Body of pancreas (tissue), 4 donors: ENCODE measurements at regions of chr11 and their contacts with region 1.

Region 1: DNA sequence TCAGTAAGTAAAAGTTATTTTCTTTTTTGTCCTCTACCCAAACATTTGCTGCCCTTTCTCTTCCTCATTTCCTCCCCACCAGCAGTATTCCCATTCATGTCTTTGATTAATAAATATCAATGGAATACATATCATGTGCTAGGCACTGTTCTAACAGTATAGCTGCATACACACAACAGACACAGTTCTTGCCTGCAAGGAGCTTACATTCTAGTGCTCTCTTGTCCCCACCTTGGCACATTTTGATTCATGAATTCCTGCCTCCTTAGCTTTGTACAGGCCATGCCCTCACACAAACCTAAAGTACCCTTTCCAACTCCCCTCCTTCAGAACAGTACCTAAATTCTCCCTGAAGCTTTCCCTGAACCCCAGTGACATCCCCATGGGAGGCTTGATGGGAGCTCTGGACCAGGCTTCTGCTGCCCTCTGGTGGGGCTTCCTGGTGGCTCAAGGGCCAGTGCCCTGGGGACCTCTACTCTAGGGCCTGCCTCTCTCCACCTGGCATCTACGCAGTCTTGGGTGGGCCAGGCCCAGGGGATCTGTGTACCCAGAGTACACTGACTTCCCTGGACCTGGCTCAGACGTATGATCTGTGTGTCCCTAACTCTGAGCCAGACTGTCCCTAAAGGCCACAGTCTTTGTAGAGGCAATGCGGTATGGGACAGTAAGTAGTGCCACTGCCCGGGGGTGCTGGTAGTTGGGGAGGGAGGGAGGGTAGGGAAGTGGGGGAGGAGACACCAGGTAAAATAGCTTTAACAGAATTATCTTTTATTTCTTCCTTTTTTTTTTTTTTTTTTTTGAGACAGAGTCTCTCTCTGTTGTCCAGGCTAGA is 14.1 kb downstream of the RPS13 start:
- DNase-seq: peak; percentile 75 to 86 (median 82)
- ATAC-seq: peak; percentile 97
- H3K4me3 ChIP-seq: no peak overlapping the region
- H3K27ac ChIP-seq: no peak overlapping the region
- H3K4me1 ChIP-seq: no peaks in the 10 kb centered on the region
- H3K27me3 ChIP-seq: no peaks in the 10 kb centered on the region
- CTCF ChIP-seq: peak; percentile 74 to 93 (median 88)
- POLR2A ChIP-seq: no peak

Region 2: GRCh38 chr11:16809886-16810668 is 253.3 kb before region 1 on chr11:
- intact Hi-C with region 1: loop called (anchors 10 kb)
- DNase-seq: peak; percentile 25 to 70 (median 54)
- ATAC-seq: peak; percentile 38
- H3K4me3 ChIP-seq: no peak overlapping the region
- H3K27ac ChIP-seq: peak overlapping the region in 1 of 4 donors; percentile 29
- H3K4me1 ChIP-seq: no peaks in the 10 kb centered on the region
- H3K27me3 ChIP-seq: no peaks in the 10 kb centered on the region
- CTCF ChIP-seq: no peak
- POLR2A ChIP-seq: no peak

Region 3: DNA sequence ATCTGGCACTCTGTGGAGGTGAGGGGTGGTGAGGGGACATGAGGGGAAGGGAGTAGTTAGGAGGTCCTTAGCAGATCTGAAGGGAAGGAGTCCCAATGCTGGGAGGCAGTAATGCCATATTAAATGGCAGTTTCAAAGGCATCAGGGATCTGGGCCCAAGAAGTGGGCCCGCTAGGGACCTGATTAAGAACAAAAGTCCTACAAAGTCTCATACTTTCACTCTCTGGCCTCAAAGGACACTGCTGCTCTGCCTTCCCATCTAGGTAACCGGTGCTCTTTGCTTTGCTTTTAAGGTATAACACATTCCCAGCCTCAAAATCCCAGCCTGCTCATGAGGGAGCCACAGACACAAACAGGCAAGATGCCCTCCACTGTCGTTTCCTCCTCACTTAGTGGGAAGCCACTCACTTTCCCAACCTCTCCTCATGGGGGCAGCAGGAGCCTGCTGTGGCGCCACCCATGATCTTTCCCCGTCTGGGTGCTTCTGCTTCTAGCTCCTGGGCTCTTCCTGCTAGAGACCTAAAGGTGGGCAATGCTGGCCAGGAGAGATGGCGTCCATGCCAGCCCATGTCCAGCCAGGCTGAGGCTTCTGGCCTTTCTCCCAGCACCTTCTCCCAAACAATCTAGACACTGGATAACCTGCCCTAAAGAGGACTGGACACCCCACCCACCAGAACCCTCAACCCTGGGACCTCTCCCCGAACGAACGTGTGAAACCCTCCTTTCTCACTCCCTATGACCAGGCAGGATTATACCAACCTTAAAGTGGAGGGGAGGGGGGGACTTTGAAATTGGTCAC is 117.5 kb before region 1 on chr11:
- intact Hi-C with region 1: loop called (anchors 5 kb)
- DNase-seq: peak; percentile 72 to 79 (median 75)
- ATAC-seq: peak; percentile 92
- H3K4me3 ChIP-seq: no peak overlapping the region
- H3K27ac ChIP-seq: peak overlapping the region in 2 of 4 donors; percentile 19 to 52
- H3K4me1 ChIP-seq: peaks cover 13% of the 10 kb centered on the region
- H3K27me3 ChIP-seq: no peaks in the 10 kb centered on the region
- CTCF ChIP-seq: peak; percentile 64 to 91 (median 81)
- POLR2A ChIP-seq: no peak